PC-3 (cell line): ENCODE measurements at regions of chr3 and their contacts with region 1.

Region 1: GRCh38 chr3:192816351-192816750 is 89.0 kb upstream of the FGF12 start:
- DNase-seq: peak; percentile 86
- ATAC-seq: no peak; the same call in 1 of the 2 replicates
- H3K4me3 ChIP-seq: no peak overlapping the region
- H3K27ac ChIP-seq: peak overlapping the region; percentile 35
- H3K4me1 ChIP-seq: peaks cover 43% of the 10 kb centered on the region
- H3K27me3 ChIP-seq: no peaks in the 10 kb centered on the region
- CTCF ChIP-seq: peak; percentile 83

Region 2: GRCh38 chr3:192879336-192880106 is 63.2 kb after region 1 on chr3:
- CTCF ChIA-PET with region 1: interaction called, 3 read pairs
- POLR2A ChIA-PET with region 1: no interaction called
- intact Hi-C with region 1: loop called (anchors 1 kb)
- DNase-seq: peak; percentile 99
- ATAC-seq: peak; percentile 86
- H3K4me3 ChIP-seq: peak overlapping the region; percentile 54
- H3K27ac ChIP-seq: no peak overlapping the region
- H3K4me1 ChIP-seq: peaks cover 68% of the 10 kb centered on the region
- H3K27me3 ChIP-seq: no peaks in the 10 kb centered on the region
- CTCF ChIP-seq: no peak

Region 3: GRCh38 chr3:192917404-192918274 is 101.3 kb after region 1 on chr3 and contains the start of gene MB21D2:
- CTCF ChIA-PET with region 1: interaction called, 17 read pairs
- POLR2A ChIA-PET with region 1: interaction called, 4 read pairs
- intact Hi-C with region 1: loop called (anchors 1 kb)
- DNase-seq: peak; percentile 83
- ATAC-seq: peak; percentile 72
- H3K4me3 ChIP-seq: peak within 1 kb of the TSS; percentile 99
- H3K27ac ChIP-seq: peak within 1 kb of the TSS; percentile 89
- H3K4me1 ChIP-seq: peaks cover 28% of the 10 kb centered on the region
- H3K27me3 ChIP-seq: no peaks in the 10 kb centered on the region
- CTCF ChIP-seq: no peak
- total RNA-seq, gene MB21D2: 22.5 and 26.0 TPM in 2 replicates

Region 4: GRCh38 chr3:193040836-193041672 is 224.7 kb after region 1 on chr3:
- CTCF ChIA-PET with region 1: interaction called, 19 read pairs
- POLR2A ChIA-PET with region 1: interaction called, 3 read pairs
- intact Hi-C with region 1: loop called (anchors 1 kb)
- DNase-seq: peak; percentile 81
- ATAC-seq: peak; percentile 89
- H3K4me3 ChIP-seq: no peak overlapping the region
- H3K27ac ChIP-seq: no peak overlapping the region
- H3K4me1 ChIP-seq: no peaks in the 10 kb centered on the region
- H3K27me3 ChIP-seq: no peaks in the 10 kb centered on the region
- CTCF ChIP-seq: peak; percentile 83

Region 5: DNA sequence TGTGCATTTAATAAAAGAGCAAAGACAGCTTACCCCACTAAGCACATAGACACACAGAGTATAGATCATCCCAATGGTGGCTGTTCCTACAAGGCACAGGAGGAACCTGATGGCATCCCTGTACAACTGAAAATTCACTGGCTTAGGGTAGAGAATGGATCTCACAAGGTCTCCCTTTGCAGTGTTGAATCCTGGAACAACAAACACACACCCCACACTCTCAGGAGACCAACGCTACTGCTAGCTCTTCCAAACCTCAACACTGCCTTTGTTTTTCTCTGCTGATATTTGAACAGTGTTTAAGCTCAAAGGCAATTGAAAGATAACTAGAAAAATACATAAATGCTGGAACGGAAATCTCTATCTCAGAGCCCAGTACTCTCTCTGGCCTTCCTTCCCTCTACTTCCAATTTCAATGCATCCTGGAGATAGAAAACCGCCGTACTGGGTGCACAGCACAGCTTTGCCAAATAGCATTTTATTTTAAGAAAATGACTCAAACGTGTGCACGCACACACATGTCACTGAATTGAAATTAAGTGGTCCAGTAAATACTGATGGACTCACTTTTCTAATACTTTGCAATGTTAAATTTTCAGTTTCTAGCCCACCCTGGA is 649.7 kb after region 1 on chr3:
- CTCF ChIA-PET with region 1: no interaction called
- POLR2A ChIA-PET with region 1: no interaction called
- intact Hi-C with region 1: loop called (anchors 2 kb)
- DNase-seq: no peak
- ATAC-seq: no peak
- H3K4me3 ChIP-seq: no peak overlapping the region
- H3K27ac ChIP-seq: no peak overlapping the region
- H3K4me1 ChIP-seq: no peaks in the 10 kb centered on the region
- H3K27me3 ChIP-seq: peaks cover 42% of the 10 kb centered on the region
- CTCF ChIP-seq: no peak

Region 6: GRCh38 chr3:193592944-193593667 is 776.8 kb after region 1 on chr3 and contains the start of gene OPA1:
- CTCF ChIA-PET with region 1: no interaction called
- POLR2A ChIA-PET with region 1: no interaction called
- intact Hi-C with region 1: loop called (anchors 5 kb)
- DNase-seq: peak; percentile 99
- ATAC-seq: peak; percentile 83
- H3K4me3 ChIP-seq: peak within 1 kb of the TSS; percentile 97
- H3K27ac ChIP-seq: peak within 1 kb of the TSS; percentile 57
- H3K4me1 ChIP-seq: peaks cover 25% of the 10 kb centered on the region
- H3K27me3 ChIP-seq: no peaks in the 10 kb centered on the region
- CTCF ChIP-seq: peak; percentile 37; the same call in 1 of the 2 replicates
- total RNA-seq, gene OPA1: 68.0 and 93.8 TPM in 2 replicates